ENCODE measurements at regions of chr3 and their contacts with region 1.

Region 1: DNA sequence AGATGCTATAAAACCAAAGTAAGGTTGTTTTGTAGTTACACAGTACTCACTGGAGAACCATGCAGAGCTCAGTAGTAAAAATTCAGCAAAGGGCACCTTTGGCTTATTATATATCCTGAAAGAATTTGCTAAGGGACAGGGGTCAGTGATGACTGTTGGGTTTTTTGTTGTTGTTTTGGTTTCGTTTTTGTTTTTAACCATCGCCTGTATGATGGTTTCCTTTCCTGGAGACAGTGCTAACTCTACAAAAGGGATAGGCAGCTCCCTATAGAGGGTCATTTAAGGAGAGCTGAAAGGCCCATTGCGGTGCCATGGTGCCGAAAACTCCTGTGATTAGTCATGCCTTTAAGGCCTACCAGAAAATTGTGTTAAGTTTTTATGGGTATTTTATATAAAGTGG is 118.2 kb upstream of the GOLIM4 start:
- DNase-seq: no peak
- ATAC-seq: no peak
- H3K4me3 ChIP-seq: no peak overlapping the region
- H3K27ac ChIP-seq: no peak overlapping the region
- H3K4me1 ChIP-seq: no peaks in the 10 kb centered on the region
- H3K27me3 ChIP-seq: no peaks in the 10 kb centered on the region
- CTCF ChIP-seq: no peak
- EP300 ChIP-seq: no peak
- POLR2A ChIP-seq: no peak
- RAD21 ChIP-seq: no peak

Region 2: DNA sequence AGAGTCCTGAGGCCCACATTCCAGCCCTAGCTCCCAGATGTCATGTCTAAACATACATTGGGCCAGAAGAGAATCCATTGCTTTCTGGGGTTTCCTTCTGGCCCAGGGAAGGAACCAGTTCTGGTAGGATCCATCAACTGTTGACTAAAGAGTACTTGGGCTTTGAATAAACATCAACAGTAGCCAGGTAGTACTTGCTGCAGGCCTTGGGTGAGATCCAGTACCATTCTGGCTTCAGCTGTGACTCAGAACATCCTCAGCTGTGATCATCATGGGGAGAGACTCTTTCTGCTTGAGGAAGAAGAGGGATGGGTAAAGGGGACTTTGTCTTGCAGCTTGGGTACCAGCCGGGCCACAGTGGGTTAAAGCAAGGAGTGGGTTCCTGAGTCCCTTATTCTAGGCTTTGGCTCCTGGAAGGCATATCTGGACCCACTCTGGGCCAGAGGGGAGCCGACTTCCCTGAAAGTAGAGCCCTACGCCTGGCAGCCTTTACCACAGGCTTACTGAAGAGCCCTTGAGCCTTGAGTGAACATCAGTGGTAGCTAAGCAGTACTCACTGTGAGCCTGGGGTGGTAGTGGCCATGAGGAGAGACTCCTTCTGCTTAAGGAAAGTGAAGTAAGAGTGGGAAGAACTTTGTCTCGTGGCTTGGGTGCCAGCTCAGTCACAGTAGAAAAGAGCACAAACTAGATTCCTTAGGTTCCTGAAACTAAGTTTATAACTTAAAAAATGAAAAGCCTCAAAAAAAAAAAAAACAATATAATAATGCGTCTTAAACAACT is 246.5 kb before region 1 on chr3:
- CTCF ChIA-PET with region 1: no interaction called
- POLR2A ChIA-PET with region 1: no interaction called
- in situ Hi-C with region 1: no loop called
- intact Hi-C with region 1: no loop called
- DNase-seq: no peak
- ATAC-seq: no peak
- H3K4me3 ChIP-seq: no peak overlapping the region
- H3K27ac ChIP-seq: no peak overlapping the region
- H3K4me1 ChIP-seq: no peaks in the 10 kb centered on the region
- H3K27me3 ChIP-seq: no peaks in the 10 kb centered on the region
- CTCF ChIP-seq: no peak
- EP300 ChIP-seq: no peak
- POLR2A ChIP-seq: no peak
- RAD21 ChIP-seq: no peak

Region 3: GRCh38 chr3:168467115-168467714 is 253.3 kb after region 1 on chr3:
- CTCF ChIA-PET with region 1: no interaction called
- POLR2A ChIA-PET with region 1: no interaction called
- in situ Hi-C with region 1: no loop called
- intact Hi-C with region 1: loop called (anchors 10 kb)
- DNase-seq: no peak
- ATAC-seq: peak; percentile 38; the same call in 1 of the 3 replicates
- H3K4me3 ChIP-seq: no peak overlapping the region
- H3K27ac ChIP-seq: no peak overlapping the region
- H3K4me1 ChIP-seq: no peaks in the 10 kb centered on the region
- H3K27me3 ChIP-seq: no peaks in the 10 kb centered on the region
- CTCF ChIP-seq: no peak; the same call in 1 of the 2 replicates
- EP300 ChIP-seq: no peak
- POLR2A ChIP-seq: no peak
- RAD21 ChIP-seq: no peak

Region 4: DNA sequence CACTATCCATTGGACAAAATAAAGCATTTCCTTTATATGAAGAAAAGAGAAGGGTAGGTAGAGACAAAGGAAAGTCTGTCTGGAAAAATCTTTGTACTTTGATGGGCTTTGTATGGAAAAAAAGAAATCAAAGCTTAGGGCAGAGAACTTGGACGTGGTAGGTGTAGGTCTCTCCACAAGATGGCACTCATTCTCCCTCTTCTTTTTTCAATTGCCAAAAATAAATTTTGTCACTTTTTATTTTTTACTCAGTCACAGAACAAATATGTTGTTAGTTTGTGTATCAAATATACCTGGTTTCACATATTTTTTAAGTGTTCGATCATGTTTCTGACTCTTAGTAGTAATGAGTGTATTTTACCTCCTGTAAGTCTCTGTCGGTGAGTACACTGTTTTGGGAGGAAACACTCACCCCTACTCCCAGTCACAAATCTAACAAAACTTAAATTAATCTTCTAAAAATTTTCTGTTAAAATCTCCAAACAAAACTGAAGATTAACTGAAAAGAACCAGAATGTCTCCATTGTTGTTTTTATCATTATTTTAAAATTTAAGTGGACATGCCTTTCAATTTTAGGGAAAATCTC is 297.6 kb after region 1 on chr3:
- CTCF ChIA-PET with region 1: no interaction called
- POLR2A ChIA-PET with region 1: no interaction called
- in situ Hi-C with region 1: no loop called
- intact Hi-C with region 1: loop called (anchors 1 kb)
- DNase-seq: no peak
- ATAC-seq: no peak
- H3K4me3 ChIP-seq: no peak overlapping the region
- H3K27ac ChIP-seq: no peak overlapping the region
- H3K4me1 ChIP-seq: no peaks in the 10 kb centered on the region
- H3K27me3 ChIP-seq: no peaks in the 10 kb centered on the region
- CTCF ChIP-seq: peak; percentile 41
- EP300 ChIP-seq: no peak
- POLR2A ChIP-seq: no peak
- RAD21 ChIP-seq: no peak

Region 5: DNA sequence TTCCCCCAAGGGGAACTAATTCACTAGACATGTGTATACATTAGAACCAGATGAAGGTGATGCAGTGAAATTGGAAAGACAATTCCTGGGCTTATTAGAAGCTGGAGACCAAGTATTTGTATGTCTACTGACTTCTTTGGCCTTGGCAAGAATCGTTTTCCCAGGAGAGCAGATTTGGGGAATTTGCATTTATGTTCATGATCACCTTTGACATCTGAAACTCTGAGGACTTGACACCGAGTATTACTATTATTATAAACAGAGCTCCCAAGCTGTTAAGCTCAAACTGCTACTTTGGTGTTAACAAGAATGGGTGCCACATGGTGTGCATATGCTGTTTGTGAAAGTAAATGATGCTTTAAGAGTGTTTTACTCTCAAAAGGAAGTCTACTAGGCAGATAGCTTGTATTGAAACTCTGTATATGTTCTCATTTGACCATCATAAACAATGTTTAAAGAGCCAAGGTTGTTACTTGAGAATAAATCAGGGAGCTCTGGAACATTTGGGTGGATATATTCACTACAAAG is 401.6 kb after region 1 on chr3:
- CTCF ChIA-PET with region 1: interaction called, 13 read pairs
- POLR2A ChIA-PET with region 1: no interaction called
- in situ Hi-C with region 1: loop called (anchors 10 kb)
- intact Hi-C with region 1: no loop called
- DNase-seq: no peak
- ATAC-seq: no peak
- H3K4me3 ChIP-seq: no peak overlapping the region
- H3K27ac ChIP-seq: no peak overlapping the region
- H3K4me1 ChIP-seq: no peaks in the 10 kb centered on the region
- H3K27me3 ChIP-seq: no peaks in the 10 kb centered on the region
- CTCF ChIP-seq: no peak
- EP300 ChIP-seq: no peak
- POLR2A ChIP-seq: no peak
- RAD21 ChIP-seq: no peak

Region 6: DNA sequence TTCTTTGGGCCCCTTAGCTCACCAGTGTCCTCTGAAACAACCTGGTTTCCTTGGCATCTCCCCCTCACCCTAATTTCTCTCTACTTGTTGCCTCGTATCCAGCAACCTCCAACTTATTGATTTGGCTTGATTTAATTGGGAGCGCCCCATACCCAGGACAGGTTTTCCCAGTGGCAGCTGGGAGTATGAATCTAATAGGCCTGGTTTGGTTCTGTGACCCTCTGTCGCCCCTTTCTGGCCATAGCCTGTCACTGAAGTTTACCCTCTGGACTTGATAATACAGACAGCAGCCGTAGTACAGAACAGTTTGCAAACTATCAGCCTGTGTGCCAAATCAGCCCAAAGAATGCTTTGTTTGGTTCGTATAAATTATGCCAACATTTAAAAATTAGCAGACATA is 406.9 kb after region 1 on chr3:
- CTCF ChIA-PET with region 1: interaction called, 13 read pairs
- POLR2A ChIA-PET with region 1: no interaction called
- in situ Hi-C with region 1: loop called (anchors 10 kb)
- intact Hi-C with region 1: loop called (anchors 1 kb)
- DNase-seq: peak; percentile 41
- ATAC-seq: peak; percentile 100
- H3K4me3 ChIP-seq: no peak overlapping the region
- H3K27ac ChIP-seq: no peak overlapping the region
- H3K4me1 ChIP-seq: no peaks in the 10 kb centered on the region
- H3K27me3 ChIP-seq: no peaks in the 10 kb centered on the region
- CTCF ChIP-seq: peak; percentile 80
- EP300 ChIP-seq: no peak
- POLR2A ChIP-seq: no peak
- RAD21 ChIP-seq: peak; percentile 67

Region 7: GRCh38 chr3:168847291-168847883 is 633.5 kb after region 1 on chr3:
- CTCF ChIA-PET with region 1: interaction called, 13 read pairs
- POLR2A ChIA-PET with region 1: no interaction called
- in situ Hi-C with region 1: loop called (anchors 5 kb)
- intact Hi-C with region 1: loop called (anchors 1 kb)
- DNase-seq: no peak
- ATAC-seq: peak; percentile 65
- H3K4me3 ChIP-seq: no peak overlapping the region; a peak in 1 of 6 replicates
- H3K27ac ChIP-seq: no peak overlapping the region
- H3K4me1 ChIP-seq: peaks cover 9% of the 10 kb centered on the region
- H3K27me3 ChIP-seq: peaks cover 0 to 4% of the 10 kb centered on the region in 2 experiments; a peak in 1 of 5 replicates
- CTCF ChIP-seq: peak; percentile 64
- EP300 ChIP-seq: no peak
- POLR2A ChIP-seq: no peak
- RAD21 ChIP-seq: 0 out of 2 replicates have a peak, but pooled peaks have one; percentile 32

Measured in HepG2 (cell line).